ENCODE measurements at regions of chr9 and their contacts with region 1.

Region 1: DNA sequence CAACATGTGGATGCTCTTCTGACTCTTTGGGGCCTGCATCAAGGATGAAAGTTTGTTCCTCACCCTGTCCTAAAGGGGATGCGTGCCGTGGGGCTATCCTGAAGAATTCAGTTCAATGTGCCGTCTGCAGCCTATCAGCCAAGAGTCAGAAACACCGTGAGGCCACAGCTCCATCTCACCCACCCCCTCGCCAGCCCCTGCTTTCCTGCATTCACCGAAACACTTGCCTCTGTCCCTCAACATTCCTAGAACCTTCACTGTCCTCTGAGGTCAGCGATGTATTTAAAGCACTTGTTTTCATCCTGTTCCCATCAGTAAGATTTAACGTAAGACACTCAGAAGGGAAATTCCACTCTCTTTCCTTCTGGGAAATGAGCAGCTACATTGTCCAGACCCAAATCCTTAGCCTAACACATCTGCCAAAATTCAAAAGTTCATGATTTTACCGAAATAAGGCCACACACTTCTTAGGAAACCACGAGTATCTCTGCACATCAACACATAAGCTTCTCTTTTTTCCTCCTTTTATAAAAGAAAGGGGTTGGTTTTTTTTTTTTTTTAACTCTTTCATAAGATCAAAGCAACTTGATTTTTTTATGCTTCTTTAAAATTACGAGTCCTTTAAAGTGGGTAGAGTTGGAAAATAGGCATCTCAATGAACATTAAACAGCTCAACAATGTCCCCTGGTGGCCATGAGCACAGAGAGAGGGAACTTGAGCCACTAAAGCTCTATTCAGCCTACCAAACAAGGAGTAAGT is 100.7 kb downstream of the SUSD1 start:
- DNase-seq: peak in 3 of 4 experiments; percentile 37 to 79 (median 41)
- ATAC-seq: peak; percentile 76
- H3K4me3 ChIP-seq: no peak overlapping the region
- H3K27ac ChIP-seq: peak overlapping the region; percentile 81
- H3K4me1 ChIP-seq: peaks cover 31 to 45% of the 10 kb centered on the region in 2 experiments
- H3K27me3 ChIP-seq: no peaks in the 10 kb centered on the region
- CTCF ChIP-seq: peak; percentile 72 to 93 (median 88)
- EP300 ChIP-seq: no peak; the same call in 1 of the 2 replicates
- POLR2A ChIP-seq: no peak
- RAD21 ChIP-seq: peak; percentile 95

Region 2: GRCh38 chr9:111759762-111760639 is 314.4 kb before region 1 on chr9:
- CTCF ChIA-PET with region 1: interaction called, 38 read pairs
- POLR2A ChIA-PET with region 1: no interaction called
- in situ Hi-C with region 1: loop called (anchors 5 kb)
- intact Hi-C with region 1: loop called (anchors 1 kb)
- DNase-seq: peak; percentile 17 to 83 (median 35)
- ATAC-seq: peak; percentile 95
- H3K4me3 ChIP-seq: no peak overlapping the region
- H3K27ac ChIP-seq: peak overlapping the region; percentile 4; the same call in 1 of the 3 replicates
- H3K4me1 ChIP-seq: no peaks in the 10 kb centered on the region
- H3K27me3 ChIP-seq: no peaks in the 10 kb centered on the region
- CTCF ChIP-seq: peak; percentile 58 to 82 (median 64); a peak in 5 of 6 replicates
- EP300 ChIP-seq: 0 out of 2 replicates have a peak, but pooled peaks have one; percentile 6
- POLR2A ChIP-seq: no peak
- RAD21 ChIP-seq: peak; percentile 95 to 97

Region 3: GRCh38 chr9:111896353-111896958 is 178.0 kb before region 1 on chr9 and contains the start of gene UGCG:
- CTCF ChIA-PET with region 1: interaction called, 4 read pairs
- POLR2A ChIA-PET with region 1: no interaction called
- in situ Hi-C with region 1: no loop called
- intact Hi-C with region 1: loop called (anchors 2 kb)
- DNase-seq: peak; percentile 92 to 94 (median 94)
- ATAC-seq: peak; percentile 83
- H3K4me3 ChIP-seq: peak within 1 kb of the TSS; percentile 78
- H3K27ac ChIP-seq: peak within 1 kb of the TSS; percentile 80
- H3K4me1 ChIP-seq: peaks cover 14 to 21% of the 10 kb centered on the region in 2 experiments; a peak in 4 of 5 replicates
- H3K27me3 ChIP-seq: no peaks in the 10 kb centered on the region
- CTCF ChIP-seq: no peak
- EP300 ChIP-seq: no peak
- POLR2A ChIP-seq: peak; percentile 93
- RAD21 ChIP-seq: no peak; a peak in 1 of 4 replicates
- polyA plus RNA-seq, gene UGCG: 29.2 to 31.9 TPM

Region 4: DNA sequence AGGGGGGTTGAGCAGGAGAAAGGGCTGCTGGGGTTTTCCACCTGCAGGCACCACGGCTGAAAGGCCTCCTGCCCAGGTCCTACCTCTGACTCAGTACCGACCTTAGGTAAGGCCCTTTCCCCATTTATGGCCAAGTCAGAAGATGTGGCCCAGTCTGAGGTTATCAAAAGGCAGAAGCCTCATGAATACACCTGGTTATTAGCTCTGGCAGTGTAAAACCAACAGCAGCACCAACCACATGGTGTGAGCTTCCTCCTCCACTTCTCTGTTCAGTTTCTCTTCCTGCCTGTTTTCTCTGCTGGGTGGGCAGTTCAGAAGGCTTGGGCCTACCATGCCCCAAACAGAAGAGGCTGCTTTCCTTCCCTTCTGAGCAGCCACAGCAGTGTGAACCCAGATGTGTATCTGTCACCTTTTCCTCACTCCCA is 90.9 kb before region 1 on chr9:
- CTCF ChIA-PET with region 1: no interaction called
- POLR2A ChIA-PET with region 1: no interaction called
- in situ Hi-C with region 1: no loop called
- intact Hi-C with region 1: loop called (anchors 5 kb)
- DNase-seq: no peak
- ATAC-seq: no peak
- H3K4me3 ChIP-seq: no peak overlapping the region
- H3K27ac ChIP-seq: no peak overlapping the region
- H3K4me1 ChIP-seq: peaks cover 9 to 11% of the 10 kb centered on the region in 2 experiments; a peak in 4 of 5 replicates
- H3K27me3 ChIP-seq: peaks cover 0 to 6% of the 10 kb centered on the region in 2 experiments; a peak in 3 of 5 replicates
- CTCF ChIP-seq: no peak
- EP300 ChIP-seq: no peak
- POLR2A ChIP-seq: no peak
- RAD21 ChIP-seq: no peak

Measured in K562 (cell line).